Activated CD4-positive, alpha-beta memory T cell treated with anti-CD3 and anti-CD28 coated beads, Interleukin-2, amount 10 ng/mL, durations not matched to agents 7 days and 5 days (primary cell): ENCODE measurements at regions of chr1 and their contacts with region 1.

Region 1: DNA sequence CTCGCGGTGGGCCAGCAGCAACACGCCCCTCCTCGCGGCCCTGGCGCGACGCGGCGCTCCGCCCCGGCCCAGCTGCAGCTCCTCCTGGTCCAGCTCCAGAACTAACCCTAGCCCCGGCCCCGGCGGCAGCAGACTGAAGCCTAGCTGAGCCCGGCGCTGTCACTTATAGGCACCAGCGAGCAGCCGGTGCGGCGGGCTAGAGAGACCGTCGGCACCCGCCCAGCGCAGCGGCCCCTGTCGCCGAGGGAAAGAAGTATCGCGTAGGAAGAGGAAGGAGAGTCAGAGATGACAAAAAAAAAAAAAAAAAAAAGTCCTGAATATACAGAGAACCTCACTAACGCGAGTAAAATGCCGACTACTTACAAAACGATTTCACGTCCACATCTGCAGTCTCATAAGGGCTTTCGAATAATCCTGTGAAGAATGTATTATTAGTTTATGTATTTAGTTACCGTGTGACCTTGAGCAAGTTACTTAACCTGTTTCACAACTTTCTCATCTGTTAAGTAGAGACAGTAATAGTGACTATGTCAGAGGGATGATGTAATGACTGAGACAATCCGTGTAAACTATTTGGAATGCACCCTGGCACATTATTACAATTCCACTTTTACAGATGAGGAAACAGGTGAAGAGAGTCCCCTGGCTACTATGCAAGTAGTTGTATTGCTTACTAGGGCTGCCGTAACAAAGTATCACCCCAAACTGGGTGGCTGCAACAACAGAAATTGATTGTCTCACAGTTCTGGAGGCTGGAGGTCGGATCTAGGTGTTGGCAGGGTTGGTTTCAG is at the start of gene SLC9A1:
- DNase-seq: peak; percentile 93
- H3K4me3 Mint-ChIP-seq: peak within 1 kb of the TSS; percentile 88
- H3K27ac Mint-ChIP-seq: peak within 1 kb of the TSS; percentile 86
- H3K4me1 Mint-ChIP-seq: peaks cover 44% of the 10 kb centered on the region
- H3K27me3 Mint-ChIP-seq: no peaks in the 10 kb centered on the region
- total RNA-seq, gene SLC9A1: 26.6 to 27.5 TPM

Region 2: GRCh38 chr1:27102707-27103491 is 52.3 kb before region 1 on chr1:
- CTCF ChIA-PET with region 1: interaction called, 14 read pairs
- POLR2A ChIA-PET with region 1: interaction called, 5 read pairs
- DNase-seq: peak; percentile 82
- H3K4me3 Mint-ChIP-seq: no peak overlapping the region
- H3K27ac Mint-ChIP-seq: no peak overlapping the region
- H3K4me1 Mint-ChIP-seq: peaks cover 9% of the 10 kb centered on the region
- H3K27me3 Mint-ChIP-seq: no peaks in the 10 kb centered on the region

Region 3: DNA sequence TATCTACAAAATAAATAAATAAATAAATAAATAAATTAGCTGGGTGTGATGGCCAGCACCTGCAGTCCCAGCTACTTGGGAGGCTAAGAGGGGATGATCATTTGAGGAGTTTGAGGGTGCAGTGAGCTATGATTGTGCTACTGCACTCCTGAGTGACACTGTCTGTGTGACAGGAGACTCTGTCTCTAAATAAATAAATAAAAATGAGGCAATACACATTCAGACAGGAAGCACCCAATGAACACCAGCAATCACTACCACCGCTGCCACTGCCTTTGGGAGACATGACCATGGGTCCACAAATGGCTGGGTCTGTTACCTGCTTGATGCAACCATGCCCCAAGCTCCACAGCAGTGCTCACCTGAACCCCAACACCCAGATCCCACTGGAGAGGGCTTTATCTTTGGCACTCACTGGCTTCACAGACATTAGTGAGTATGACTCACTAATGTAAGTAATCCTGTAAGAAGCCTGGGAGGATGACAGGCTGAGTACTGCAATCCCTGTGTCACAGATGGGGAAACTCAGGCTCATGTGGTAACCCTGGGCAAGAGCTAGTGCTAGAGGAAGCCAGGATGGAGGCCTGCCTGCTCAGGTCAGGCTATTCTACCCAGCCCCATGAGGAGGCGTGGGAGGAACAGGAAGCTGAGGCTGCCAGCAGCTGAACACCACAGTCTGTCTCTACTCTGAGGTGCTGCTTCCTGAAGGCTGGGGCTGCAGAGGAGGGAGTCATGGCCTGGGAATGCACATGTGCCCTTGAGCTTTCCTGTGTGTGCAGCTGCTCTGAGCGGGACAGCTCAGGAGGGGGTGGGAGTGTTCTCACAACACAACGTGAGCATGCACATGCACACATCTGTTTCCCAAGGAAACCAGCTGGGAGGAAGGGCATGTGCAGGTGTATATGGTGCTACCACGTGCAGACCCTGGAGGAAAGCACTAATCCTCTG is 43.3 kb before region 1 on chr1:
- CTCF ChIA-PET with region 1: interaction called, 29 read pairs
- POLR2A ChIA-PET with region 1: interaction called, 57 read pairs
- DNase-seq: peak; percentile 79
- H3K4me3 Mint-ChIP-seq: no peak overlapping the region
- H3K27ac Mint-ChIP-seq: peak overlapping the region; percentile 70
- H3K4me1 Mint-ChIP-seq: peaks cover 43% of the 10 kb centered on the region
- H3K27me3 Mint-ChIP-seq: no peaks in the 10 kb centered on the region

Region 4: GRCh38 chr1:27136998-27137542 is 18.1 kb before region 1 on chr1:
- CTCF ChIA-PET with region 1: interaction called, 33 read pairs
- POLR2A ChIA-PET with region 1: interaction called, 205 read pairs
- DNase-seq: peak; percentile 89
- H3K4me3 Mint-ChIP-seq: peak overlapping the region; percentile 82
- H3K27ac Mint-ChIP-seq: peak overlapping the region; percentile 97
- H3K4me1 Mint-ChIP-seq: peaks cover 42% of the 10 kb centered on the region
- H3K27me3 Mint-ChIP-seq: no peaks in the 10 kb centered on the region

Region 5: GRCh38 chr1:27234049-27234882 is 79.1 kb after region 1 on chr1 and contains the start of gene WDTC1:
- CTCF ChIA-PET with region 1: no interaction called
- POLR2A ChIA-PET with region 1: interaction called, 10 read pairs
- DNase-seq: peak; percentile 99
- H3K4me3 Mint-ChIP-seq: peak within 1 kb of the TSS; percentile 99
- H3K27ac Mint-ChIP-seq: peak within 1 kb of the TSS; percentile 89
- H3K4me1 Mint-ChIP-seq: peaks cover 35% of the 10 kb centered on the region
- H3K27me3 Mint-ChIP-seq: no peaks in the 10 kb centered on the region
- total RNA-seq, gene WDTC1: 45.4 to 47.1 TPM

Region 6: GRCh38 chr1:27292106-27292505 is 136.9 kb after region 1 on chr1:
- CTCF ChIA-PET with region 1: no interaction called
- POLR2A ChIA-PET with region 1: no interaction called
- DNase-seq: no peak
- H3K4me3 Mint-ChIP-seq: no peak overlapping the region
- H3K27ac Mint-ChIP-seq: no peak overlapping the region
- H3K4me1 Mint-ChIP-seq: peaks cover 4% of the 10 kb centered on the region
- H3K27me3 Mint-ChIP-seq: no peaks in the 10 kb centered on the region